GM12878 (cell line): ENCODE measurements at regions of chr9 and their contacts with region 1.

Region 1: DNA sequence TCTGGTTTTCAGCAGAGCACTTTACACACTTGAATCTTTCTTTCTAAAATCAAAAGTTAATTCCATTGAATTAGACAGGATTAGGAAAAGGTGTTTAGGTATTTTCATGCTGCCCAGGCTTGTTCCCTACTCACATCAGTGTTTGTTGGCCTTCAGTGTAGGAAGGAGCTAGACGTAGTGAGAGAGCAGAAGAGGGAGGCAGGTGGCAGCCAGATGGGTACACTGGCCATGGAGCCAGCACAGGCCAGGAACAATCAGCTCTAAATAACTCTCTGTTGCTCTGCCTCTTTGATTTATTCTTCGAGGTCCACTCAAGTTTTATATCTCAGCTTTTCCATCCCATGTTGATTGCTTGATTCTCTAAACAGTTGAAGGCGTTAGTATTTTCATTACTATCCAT is 529.6 kb downstream of the PSAT1 start:
- DNase-seq: no peak
- ATAC-seq: no peak
- H3K4me3 ChIP-seq: no peak overlapping the region
- H3K27ac ChIP-seq: no peak overlapping the region
- H3K4me1 ChIP-seq: no peaks in the 10 kb centered on the region
- H3K27me3 ChIP-seq: no peaks in the 10 kb centered on the region
- CTCF ChIP-seq: no peak
- EP300 ChIP-seq: no peak
- POLR2A ChIP-seq: no peak
- RAD21 ChIP-seq: no peak

Region 2: DNA sequence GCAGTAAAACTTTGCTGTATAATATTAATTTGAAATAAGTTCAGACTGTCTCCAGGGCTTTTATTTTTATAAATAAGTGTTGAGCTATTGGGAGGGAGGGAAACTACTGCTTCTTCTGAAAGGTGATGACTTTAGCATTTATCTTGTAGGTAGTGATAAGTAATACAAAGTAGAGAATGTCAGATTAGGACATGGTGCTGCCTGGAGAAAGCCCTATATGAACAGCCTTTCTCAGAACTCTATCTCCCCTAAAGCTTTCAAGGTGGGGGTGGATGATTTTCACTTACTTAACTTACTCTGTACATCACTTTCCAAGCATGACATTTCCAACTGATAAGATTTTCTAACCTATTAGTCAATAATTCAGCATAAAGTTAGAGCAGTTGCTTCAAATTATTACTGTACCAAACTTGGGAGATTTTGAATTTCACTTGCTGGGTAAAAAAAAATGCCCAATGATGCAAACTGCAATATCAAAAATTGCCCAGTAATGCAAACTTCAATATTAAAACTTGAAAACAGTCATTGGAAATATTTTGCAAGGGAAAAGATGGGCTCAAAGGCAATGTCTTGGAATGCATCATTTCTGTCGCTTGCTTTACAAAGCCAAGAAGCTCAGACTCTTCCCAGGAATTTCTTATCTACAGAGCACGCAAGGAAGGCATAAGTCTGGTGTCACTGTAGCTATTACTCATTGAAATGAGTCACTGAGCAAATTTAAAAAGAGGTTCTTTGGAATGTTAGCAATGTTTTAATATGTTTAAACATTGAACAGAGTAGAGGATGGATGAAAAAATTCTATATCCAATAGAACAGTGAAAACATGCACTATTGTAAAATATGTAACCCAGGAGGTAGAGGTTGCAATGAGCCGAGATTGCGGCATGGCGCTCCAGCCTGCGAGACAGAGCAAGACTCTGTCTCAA is 39.9 kb after region 1 on chr9:
- CTCF ChIA-PET with region 1: no interaction called
- POLR2A ChIA-PET with region 1: no interaction called
- RAD21 ChIA-PET with region 1: no interaction called
- SMC1A ChIA-PET with region 1: no interaction called
- in situ Hi-C with region 1: no loop called
- intact Hi-C with region 1: loop called (anchors 5 kb)
- DNase-seq: no peak
- ATAC-seq: no peak
- H3K4me3 ChIP-seq: no peak overlapping the region
- H3K27ac ChIP-seq: no peak overlapping the region
- H3K4me1 ChIP-seq: no peaks in the 10 kb centered on the region
- H3K27me3 ChIP-seq: no peaks in the 10 kb centered on the region
- CTCF ChIP-seq: no peak
- EP300 ChIP-seq: no peak
- POLR2A ChIP-seq: no peak
- RAD21 ChIP-seq: no peak